AG04450 (cell line): ENCODE measurements at regions of chr5 and their contacts with region 1.

Region 1: GRCh38 chr5:145347026-145347616 is 488.0 kb downstream of the PRELID2 start:
- DNase-seq: peak; percentile 13
- H3K4me3 ChIP-seq: no peak overlapping the region
- H3K27ac ChIP-seq: no peak overlapping the region
- H3K27me3 ChIP-seq: no peaks in the 10 kb centered on the region
- CTCF ChIP-seq: peak; percentile 75

Region 2: GRCh38 chr5:144467792-144468191 is 879.3 kb before region 1 on chr5:
- CTCF ChIA-PET with region 1: interaction called, 12 read pairs
- POLR2A ChIA-PET with region 1: no interaction called
- DNase-seq: peak; percentile 24
- H3K4me3 ChIP-seq: no peak overlapping the region
- H3K27ac ChIP-seq: no peak overlapping the region
- H3K27me3 ChIP-seq: no peaks in the 10 kb centered on the region
- CTCF ChIP-seq: peak; percentile 80

Region 3: GRCh38 chr5:145365464-145365863 is 18.3 kb after region 1 on chr5:
- CTCF ChIA-PET with region 1: interaction called, 17 read pairs
- POLR2A ChIA-PET with region 1: no interaction called
- DNase-seq: no peak
- H3K4me3 ChIP-seq: no peak overlapping the region
- H3K27ac ChIP-seq: no peak overlapping the region
- H3K27me3 ChIP-seq: no peaks in the 10 kb centered on the region
- CTCF ChIP-seq: no peak

Region 4: DNA sequence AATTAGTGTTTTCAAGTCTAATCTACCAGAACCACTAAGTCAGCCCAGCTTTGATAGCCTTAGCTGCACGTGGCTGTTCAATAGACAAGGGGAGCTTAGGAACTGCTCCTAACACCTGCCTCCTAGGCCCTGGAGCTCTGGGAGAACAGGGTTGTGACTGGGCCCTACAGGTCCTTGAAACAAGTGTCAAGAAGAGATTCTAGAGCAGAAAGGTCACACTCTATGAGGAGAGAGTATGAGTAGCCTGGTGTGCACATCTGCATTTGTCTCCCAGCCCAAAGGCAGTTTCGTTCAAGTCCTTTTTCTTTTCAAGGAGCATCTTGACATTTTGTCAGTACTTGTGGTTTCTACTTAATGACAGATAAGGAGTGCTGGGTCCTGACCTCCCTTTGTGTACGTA is 281.9 kb after region 1 on chr5:
- CTCF ChIA-PET with region 1: no interaction called
- POLR2A ChIA-PET with region 1: no interaction called
- DNase-seq: no peak
- H3K4me3 ChIP-seq: no peak overlapping the region
- H3K27ac ChIP-seq: no peak overlapping the region
- H3K27me3 ChIP-seq: no peaks in the 10 kb centered on the region
- CTCF ChIP-seq: no peak

Region 5: GRCh38 chr5:145660897-145661640 is 313.9 kb after region 1 on chr5:
- CTCF ChIA-PET with region 1: no interaction called
- POLR2A ChIA-PET with region 1: no interaction called
- DNase-seq: no peak
- H3K4me3 ChIP-seq: no peak overlapping the region
- H3K27ac ChIP-seq: no peak overlapping the region
- H3K27me3 ChIP-seq: no peaks in the 10 kb centered on the region
- CTCF ChIP-seq: no peak